Activated B cell treated with CpG ODN at 0.5 μM for 24 hours (primary cell): ENCODE measurements at regions of chr14 and their contacts with region 1.

Region 1: DNA sequence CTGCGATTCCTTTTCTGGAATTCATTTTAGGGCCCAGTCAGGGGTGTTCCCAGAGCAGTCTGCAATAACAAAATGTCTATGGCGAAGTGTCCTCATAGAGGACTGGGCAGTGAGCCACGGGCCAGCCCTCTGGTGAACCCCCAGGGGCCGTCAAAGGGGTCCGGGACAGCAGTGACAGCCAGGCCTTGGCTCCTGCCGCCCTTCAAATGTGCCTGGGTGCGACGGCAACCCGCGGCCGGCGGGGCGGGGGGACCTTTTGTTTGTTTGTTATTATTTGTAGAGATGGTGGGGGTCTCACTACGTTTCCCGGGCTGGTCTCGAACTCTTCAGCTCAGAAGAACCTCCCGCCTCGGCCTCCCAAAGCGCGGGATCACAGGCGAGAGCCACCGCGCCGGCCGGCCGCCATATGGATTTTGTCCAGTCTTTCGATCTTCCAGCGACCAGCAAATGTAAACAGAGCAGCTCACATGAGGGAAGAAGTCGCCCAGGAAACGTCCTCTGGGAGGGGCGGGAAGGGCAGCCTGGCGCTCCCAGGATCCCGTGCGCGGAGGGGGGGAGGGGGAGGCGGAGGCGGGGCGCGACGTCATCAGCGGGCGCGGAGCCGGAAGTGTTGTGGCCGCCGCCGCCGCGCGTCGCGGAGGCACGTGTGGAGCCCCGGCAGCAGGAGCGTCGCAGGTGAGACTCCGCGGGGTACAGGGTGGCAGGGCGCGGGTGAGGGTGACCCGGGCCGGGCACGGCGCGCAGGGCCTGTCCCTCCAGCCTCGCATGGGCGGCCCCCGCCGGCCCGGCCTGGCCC is at the start of gene TRMT61A:
- DNase-seq: peak; percentile 65
- ATAC-seq: peak; percentile 26
- H3K4me3 Mint-ChIP-seq: peak within 1 kb of the TSS; percentile 92
- H3K27ac Mint-ChIP-seq: peak within 1 kb of the TSS; percentile 96
- H3K4me1 Mint-ChIP-seq: peaks cover 62% of the 10 kb centered on the region
- H3K27me3 Mint-ChIP-seq: no peaks in the 10 kb centered on the region
- CTCF ChIP-seq: no peak
- total RNA-seq, gene TRMT61A: 19.4 and 21.8 TPM in 2 replicates

Region 2: GRCh38 chr14:103562429-103563225 is 33.8 kb after region 1 on chr14 and contains the starts of genes BAG5 and COA8:
- CTCF ChIA-PET with region 1: no interaction called
- POLR2A ChIA-PET with region 1: interaction called, 15 read pairs
- intact Hi-C with region 1: loop called (anchors 1 kb)
- DNase-seq: peak; percentile 89
- ATAC-seq: peak; percentile 79
- H3K4me3 Mint-ChIP-seq: peak within 1 kb of the TSS; percentile 89
- H3K27ac Mint-ChIP-seq: peak within 1 kb of the TSS; percentile 79
- H3K4me1 Mint-ChIP-seq: peaks cover 52% of the 10 kb centered on the region
- H3K27me3 Mint-ChIP-seq: no peaks in the 10 kb centered on the region
- CTCF ChIP-seq: no peak
- total RNA-seq, gene BAG5: 26.9 and 28.8 TPM in 2 replicates
- total RNA-seq, gene COA8: 28.4 and 28.8 TPM in 2 replicates